ENCODE measurements at regions of chr22 and their contacts with region 1.

Region 1: GRCh38 chr22:24503137-24503842 is 8.2 kb downstream of the UPB1 start:
- DNase-seq: no peak
- ATAC-seq: no peak
- H3K4me3 ChIP-seq: no peak overlapping the region
- H3K27ac ChIP-seq: peak overlapping the region; percentile 99
- H3K4me1 ChIP-seq: peaks cover 100% of the 10 kb centered on the region
- H3K27me3 ChIP-seq: no peaks in the 10 kb centered on the region
- CTCF ChIP-seq: peak; percentile 79
- EP300 ChIP-seq: no peak
- POLR2A ChIP-seq: no peak
- RAD21 ChIP-seq: peak; percentile 61

Region 2: DNA sequence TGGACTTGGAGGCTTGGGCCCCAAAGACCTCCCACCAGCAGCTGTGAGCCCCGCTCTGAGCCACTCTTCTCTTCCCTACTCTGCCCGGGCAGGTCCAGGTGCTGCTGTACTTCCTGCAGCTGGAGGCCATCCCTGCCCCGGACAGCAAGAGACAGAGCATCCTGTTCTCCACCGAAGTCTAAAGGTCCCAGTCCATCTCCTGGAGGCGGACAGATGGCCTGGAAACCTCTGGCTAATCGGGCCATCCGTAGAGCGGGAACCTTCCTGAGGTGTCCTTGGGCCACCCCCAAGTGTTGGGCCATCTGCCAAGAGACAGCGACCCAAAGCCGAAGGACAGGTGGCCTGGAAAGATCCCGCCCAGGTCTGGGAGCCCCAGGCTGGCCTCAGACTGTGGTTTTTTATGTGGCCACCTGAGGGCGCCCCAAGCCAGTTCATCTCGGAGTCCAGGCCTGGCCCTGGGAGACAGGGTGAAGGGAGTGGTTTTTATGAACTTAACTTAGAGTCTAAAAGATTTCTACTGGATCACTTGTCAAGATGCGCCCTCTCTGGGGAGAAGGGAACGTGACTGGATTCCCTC is 1187.9 kb before region 1 on chr22:
- CTCF ChIA-PET with region 1: no interaction called
- POLR2A ChIA-PET with region 1: no interaction called
- in situ Hi-C with region 1: no loop called
- intact Hi-C with region 1: no loop called
- DNase-seq: peak; percentile 39
- ATAC-seq: peak; percentile 66
- H3K4me3 ChIP-seq: no peak overlapping the region
- H3K27ac ChIP-seq: no peak overlapping the region
- H3K4me1 ChIP-seq: no peaks in the 10 kb centered on the region
- H3K27me3 ChIP-seq: no peaks in the 10 kb centered on the region
- CTCF ChIP-seq: peak; percentile 85
- EP300 ChIP-seq: no peak
- POLR2A ChIP-seq: no peak
- RAD21 ChIP-seq: peak; percentile 74

Region 3: GRCh38 chr22:24325105-24325757 is 178.1 kb before region 1 on chr22:
- CTCF ChIA-PET with region 1: no interaction called
- POLR2A ChIA-PET with region 1: no interaction called
- in situ Hi-C with region 1: no loop called
- intact Hi-C with region 1: no loop called
- DNase-seq: peak; percentile 49
- ATAC-seq: no peak
- H3K4me3 ChIP-seq: no peak overlapping the region
- H3K27ac ChIP-seq: no peak overlapping the region
- H3K4me1 ChIP-seq: peaks cover 26% of the 10 kb centered on the region
- H3K27me3 ChIP-seq: no peaks in the 10 kb centered on the region
- CTCF ChIP-seq: peak; percentile 68
- EP300 ChIP-seq: no peak
- POLR2A ChIP-seq: no peak
- RAD21 ChIP-seq: no peak

Region 4: GRCh38 chr22:24350627-24351026 is 152.7 kb before region 1 on chr22:
- CTCF ChIA-PET with region 1: no interaction called
- POLR2A ChIA-PET with region 1: no interaction called
- in situ Hi-C with region 1: no loop called
- intact Hi-C with region 1: no loop called
- DNase-seq: no peak
- ATAC-seq: no peak
- H3K4me3 ChIP-seq: no peak overlapping the region
- H3K27ac ChIP-seq: no peak overlapping the region
- H3K4me1 ChIP-seq: no peaks in the 10 kb centered on the region
- H3K27me3 ChIP-seq: no peaks in the 10 kb centered on the region
- CTCF ChIP-seq: no peak
- EP300 ChIP-seq: no peak
- POLR2A ChIP-seq: no peak
- RAD21 ChIP-seq: no peak

Region 5: DNA sequence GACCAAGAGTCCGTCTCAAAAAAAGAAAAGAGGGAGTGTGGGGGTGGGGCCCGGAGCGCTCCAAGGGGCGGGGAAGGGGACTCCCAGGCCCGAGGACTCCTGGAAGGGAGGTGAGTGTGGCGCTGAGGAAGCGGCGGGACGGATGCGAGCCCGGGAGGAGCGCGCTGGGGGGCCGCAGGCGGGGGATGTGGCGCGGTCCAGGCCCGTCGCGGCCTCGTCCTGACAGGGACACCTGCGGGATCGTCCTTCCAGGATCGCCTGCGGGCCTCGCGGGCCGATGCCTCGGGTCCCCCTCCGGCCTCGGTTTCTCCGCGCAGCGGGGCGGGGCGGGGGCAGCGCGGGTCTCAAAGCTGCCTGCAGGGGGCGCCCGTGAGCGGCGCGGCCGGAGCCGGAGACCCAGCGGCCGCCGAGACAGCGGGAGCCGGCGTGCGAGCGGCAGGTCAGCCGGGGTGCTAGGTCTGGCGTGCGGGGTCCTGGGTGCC is 79.7 kb before region 1 on chr22:
- CTCF ChIA-PET with region 1: interaction called, 3 read pairs
- POLR2A ChIA-PET with region 1: interaction called, 5 read pairs
- in situ Hi-C with region 1: no loop called
- intact Hi-C with region 1: loop called (anchors 5 kb)
- DNase-seq: no peak
- ATAC-seq: peak; percentile 28
- H3K4me3 ChIP-seq: peak overlapping the region; percentile 68 to 79 (median 71); a peak in 4 of 6 replicates
- H3K27ac ChIP-seq: no peak overlapping the region
- H3K4me1 ChIP-seq: peaks cover 42% of the 10 kb centered on the region
- H3K27me3 ChIP-seq: peaks cover 0 to 4% of the 10 kb centered on the region in 2 experiments; a peak in 2 of 5 replicates
- CTCF ChIP-seq: peak; percentile 75
- EP300 ChIP-seq: no peak
- POLR2A ChIP-seq: no peak
- RAD21 ChIP-seq: peak; percentile 87

Region 6: GRCh38 chr22:24516301-24516737 is 13.0 kb after region 1 on chr22:
- CTCF ChIA-PET with region 1: no interaction called
- POLR2A ChIA-PET with region 1: interaction called, 46 read pairs
- in situ Hi-C with region 1: no loop called
- intact Hi-C with region 1: loop called (anchors 2 kb)
- DNase-seq: peak; percentile 62
- ATAC-seq: peak; percentile 20
- H3K4me3 ChIP-seq: no peak overlapping the region
- H3K27ac ChIP-seq: peak overlapping the region; percentile 39
- H3K4me1 ChIP-seq: peaks cover 98% of the 10 kb centered on the region
- H3K27me3 ChIP-seq: no peaks in the 10 kb centered on the region
- CTCF ChIP-seq: 0 out of 2 replicates have a peak, but pooled peaks have one; percentile 8
- EP300 ChIP-seq: no peak
- POLR2A ChIP-seq: no peak
- RAD21 ChIP-seq: no peak

Region 7: DNA sequence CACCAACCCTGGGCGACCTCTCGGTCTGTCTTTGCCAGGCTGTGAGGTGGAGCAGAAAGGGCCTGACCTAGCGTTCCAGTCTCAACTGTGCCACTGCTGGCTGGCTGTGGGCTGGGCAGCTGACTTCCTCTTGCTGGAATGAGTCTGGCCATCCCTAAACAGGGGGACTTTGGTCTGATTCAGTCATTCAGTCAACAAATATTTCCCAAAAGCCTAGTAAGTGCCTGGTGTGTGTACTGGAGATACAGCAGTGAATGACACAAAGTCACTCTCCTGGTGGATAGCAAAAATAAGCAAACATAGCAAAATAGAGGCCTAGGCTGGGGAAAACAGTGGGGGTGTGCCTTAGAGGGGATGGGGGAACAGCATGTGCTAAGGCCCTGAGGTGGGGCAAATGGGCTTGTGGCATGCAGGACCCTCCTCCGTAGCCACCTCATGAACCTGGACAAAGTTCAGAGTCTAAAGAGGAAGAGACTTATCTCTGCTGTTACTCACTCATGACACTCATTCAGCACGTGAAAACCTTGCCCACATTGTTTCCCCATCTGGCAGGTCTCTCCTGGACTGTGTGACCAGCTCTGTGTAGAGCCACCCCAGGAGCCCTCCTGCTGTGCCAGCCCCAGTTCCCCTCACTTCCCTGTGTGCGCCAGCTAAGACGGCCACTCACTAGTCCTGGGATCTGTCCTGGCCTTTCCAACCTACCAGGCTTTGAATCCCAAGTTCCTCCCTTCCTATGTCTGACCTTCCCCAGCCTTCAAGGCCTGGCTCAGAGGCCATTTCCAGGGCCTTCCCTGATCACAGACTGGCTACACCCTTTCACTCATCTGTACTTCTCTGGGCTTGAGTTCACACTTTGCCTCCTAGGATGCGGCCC is 47.0 kb after region 1 on chr22:
- CTCF ChIA-PET with region 1: no interaction called
- POLR2A ChIA-PET with region 1: interaction called, 32 read pairs
- in situ Hi-C with region 1: no loop called
- intact Hi-C with region 1: no loop called
- DNase-seq: peak; percentile 99
- ATAC-seq: peak; percentile 84
- H3K4me3 ChIP-seq: peak overlapping the region in 1 of 3 experiments; percentile 51; a peak in 2 of 6 replicates
- H3K27ac ChIP-seq: peak overlapping the region; percentile 98
- H3K4me1 ChIP-seq: peaks cover 75% of the 10 kb centered on the region
- H3K27me3 ChIP-seq: no peaks in the 10 kb centered on the region; a peak in 1 of 5 replicates
- CTCF ChIP-seq: 0 out of 2 replicates have a peak, but pooled peaks have one; percentile 2
- EP300 ChIP-seq: peak; percentile 82 to 91
- POLR2A ChIP-seq: peak; percentile 57 to 79
- RAD21 ChIP-seq: no peak

Region 8: GRCh38 chr22:24583221-24584165 is 80.2 kb after region 1 on chr22:
- CTCF ChIA-PET with region 1: no interaction called
- POLR2A ChIA-PET with region 1: interaction called, 11 read pairs
- in situ Hi-C with region 1: no loop called
- intact Hi-C with region 1: no loop called
- DNase-seq: peak; percentile 76
- ATAC-seq: peak; percentile 65
- H3K4me3 ChIP-seq: peak overlapping the region; percentile 45 to 69 (median 47); a peak in 5 of 6 replicates
- H3K27ac ChIP-seq: peak overlapping the region; percentile 69
- H3K4me1 ChIP-seq: peaks cover 86% of the 10 kb centered on the region
- H3K27me3 ChIP-seq: no peaks in the 10 kb centered on the region
- CTCF ChIP-seq: 0 out of 2 replicates have a peak, but pooled peaks have one; percentile 2
- EP300 ChIP-seq: no peak
- POLR2A ChIP-seq: peak in 1 of 2 experiments; percentile 44; a peak in 1 of 4 replicates
- RAD21 ChIP-seq: no peak

Region 9: GRCh38 chr22:24716602-24717001 is 213.3 kb after region 1 on chr22:
- CTCF ChIA-PET with region 1: no interaction called
- POLR2A ChIA-PET with region 1: no interaction called
- in situ Hi-C with region 1: no loop called
- intact Hi-C with region 1: no loop called
- DNase-seq: no peak
- ATAC-seq: no peak
- H3K4me3 ChIP-seq: no peak overlapping the region
- H3K27ac ChIP-seq: no peak overlapping the region
- H3K4me1 ChIP-seq: no peaks in the 10 kb centered on the region
- H3K27me3 ChIP-seq: peaks cover 0 to 5% of the 10 kb centered on the region in 2 experiments; a peak in 1 of 5 replicates
- CTCF ChIP-seq: no peak
- EP300 ChIP-seq: no peak
- POLR2A ChIP-seq: no peak
- RAD21 ChIP-seq: no peak

Measured in HepG2 (cell line).